ENCODE measurements at regions of chr15 and their contacts with region 1.

Region 1: DNA sequence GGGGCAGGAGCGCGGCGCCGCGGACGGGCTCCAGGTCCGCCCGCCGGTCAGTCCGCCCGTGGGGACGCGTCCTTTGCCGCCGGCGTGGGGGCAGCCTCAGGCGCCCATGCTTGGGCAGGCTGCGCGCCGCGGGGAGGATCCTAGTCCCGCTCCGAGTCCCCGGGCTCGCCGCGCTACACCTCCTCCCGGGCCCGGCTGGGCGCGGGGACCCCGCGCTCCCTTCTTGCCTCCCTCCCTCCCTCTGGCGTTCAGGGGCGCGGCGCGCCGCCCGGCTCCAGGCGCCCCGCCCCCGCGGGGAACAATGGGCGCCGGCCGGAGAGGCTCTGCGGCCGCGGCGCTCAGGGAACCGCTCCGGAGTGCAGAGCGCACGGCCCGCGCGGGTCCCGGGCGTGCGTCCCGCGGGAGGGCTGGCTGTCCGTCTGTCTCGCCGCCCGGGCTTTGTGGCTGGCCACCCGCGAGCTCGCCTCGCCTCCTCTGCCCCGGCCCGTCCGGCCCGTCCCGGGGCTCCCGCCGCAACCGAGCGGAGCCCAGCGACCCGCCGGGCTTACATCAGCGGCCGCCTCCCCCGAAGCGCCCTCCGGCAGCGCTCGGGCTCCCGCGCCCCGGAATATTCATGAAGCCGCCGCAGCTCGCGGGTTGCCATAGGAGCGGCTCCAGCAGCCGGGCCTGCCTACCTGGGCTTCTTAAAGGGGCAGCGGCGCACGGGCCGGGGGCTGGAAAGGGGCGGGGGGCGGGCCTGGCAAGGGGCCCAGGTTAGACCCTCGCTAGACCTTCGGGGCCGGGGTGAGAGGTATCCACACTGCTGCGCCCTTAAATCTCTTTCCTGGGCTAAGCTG is at the start of gene HCN4:
- DNase-seq: peak in 3 of 5 donors; percentile 34 to 63 (median 39)
- ATAC-seq: peak in 3 of 4 donors; percentile 55 to 63 (median 56)
- H3K4me3 ChIP-seq: peak within 1 kb of the TSS; percentile 35 to 78 (median 56)
- H3K27ac ChIP-seq: peak within 1 kb of the TSS in 8 of 12 donors; percentile 33 to 72 (median 50)
- H3K4me1 ChIP-seq: peaks cover 0 to 39% (median 5%) of the 10 kb centered on the region in 12 donors
- H3K27me3 ChIP-seq: peaks cover 4 to 72% (median 16%) of the 10 kb centered on the region in 9 donors
- CTCF ChIP-seq: peak in 1 of 12 donors; percentile 10
- POLR2A ChIP-seq: peak in 1 of 2 donors; percentile 19
- total RNA-seq, gene HCN4: 6.0 to 23.0 (median 9.7) TPM

Region 2: GRCh38 chr15:73318463-73319351 is 49.8 kb before region 1 on chr15:
- intact Hi-C with region 1: loop called in 1 of 10 experiments (anchors 10 kb)
- DNase-seq: no peak
- ATAC-seq: peak in 3 of 4 donors; percentile 11 to 37 (median 13)
- H3K4me3 ChIP-seq: no peak overlapping the region
- H3K27ac ChIP-seq: no peak overlapping the region
- H3K4me1 ChIP-seq: peaks cover 0 to 6% (median 0%) of the 10 kb centered on the region in 12 donors
- H3K27me3 ChIP-seq: peaks cover 0 to 25% (median 9%) of the 10 kb centered on the region in 9 donors
- CTCF ChIP-seq: no peak
- POLR2A ChIP-seq: no peak